ENCODE measurements at regions of chr15 and their contacts with region 1.

Region 1: DNA sequence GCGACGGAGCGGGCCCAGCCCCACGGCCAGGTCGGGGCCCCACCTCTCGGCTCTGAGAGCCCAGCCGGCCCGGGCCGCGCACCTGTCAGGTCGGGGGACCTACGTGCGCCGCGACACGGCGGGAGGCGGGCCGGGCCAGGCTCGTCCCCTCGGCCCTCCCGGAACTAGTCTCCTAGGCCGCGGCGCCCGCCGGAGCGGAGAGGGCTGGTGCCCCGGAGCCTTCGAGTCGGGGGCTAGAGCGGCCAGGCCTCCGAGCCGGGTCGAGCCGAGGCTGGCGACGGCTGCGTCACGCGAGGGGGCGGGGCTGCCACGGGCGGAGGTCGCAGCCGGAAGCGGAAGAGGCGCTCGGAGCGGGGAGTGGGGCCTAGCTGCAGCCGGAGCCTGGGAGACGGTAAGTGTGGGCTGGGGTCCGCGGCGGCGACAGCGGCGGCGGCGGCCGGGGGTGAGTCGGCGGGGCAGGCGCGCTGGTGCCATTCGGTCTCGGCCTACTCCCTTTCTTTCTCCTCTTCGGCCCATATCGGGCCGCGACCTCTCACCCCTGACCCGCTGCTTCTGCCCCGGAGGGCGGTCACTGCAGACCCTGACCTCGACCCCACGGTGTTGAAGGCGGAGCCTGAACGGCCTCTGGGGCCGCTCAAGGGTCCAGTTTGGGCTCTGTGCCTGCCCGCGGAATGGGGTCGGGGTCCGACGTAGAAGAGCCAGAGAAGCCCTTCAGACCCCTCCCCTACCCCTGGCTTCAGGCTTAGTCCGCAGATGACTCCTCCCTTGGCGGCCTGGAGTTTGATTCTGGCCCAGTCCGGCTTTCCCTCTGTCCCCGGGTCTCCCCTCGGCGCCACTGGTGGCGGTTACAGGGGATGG is at the start of gene CLK3:
- DNase-seq: peak; percentile 98
- ATAC-seq: peak; percentile 90
- total RNA-seq, gene CLK3: 47.3 TPM

Region 2: GRCh38 chr15:74433592-74434262 is 182.0 kb before region 1 on chr15 and contains the start of gene SEMA7A:
- intact Hi-C with region 1: loop called (anchors 10 kb)
- DNase-seq: peak; percentile 92
- ATAC-seq: peak; percentile 91
- total RNA-seq, gene SEMA7A: 1.6 TPM

Region 3: GRCh38 chr15:74460871-74461846 is 154.6 kb before region 1 on chr15 and contains the start of gene UBL7:
- intact Hi-C with region 1: loop called (anchors 5 kb)
- DNase-seq: peak; percentile 98
- ATAC-seq: peak; percentile 100
- total RNA-seq, gene UBL7: 47.7 TPM

Region 4: DNA sequence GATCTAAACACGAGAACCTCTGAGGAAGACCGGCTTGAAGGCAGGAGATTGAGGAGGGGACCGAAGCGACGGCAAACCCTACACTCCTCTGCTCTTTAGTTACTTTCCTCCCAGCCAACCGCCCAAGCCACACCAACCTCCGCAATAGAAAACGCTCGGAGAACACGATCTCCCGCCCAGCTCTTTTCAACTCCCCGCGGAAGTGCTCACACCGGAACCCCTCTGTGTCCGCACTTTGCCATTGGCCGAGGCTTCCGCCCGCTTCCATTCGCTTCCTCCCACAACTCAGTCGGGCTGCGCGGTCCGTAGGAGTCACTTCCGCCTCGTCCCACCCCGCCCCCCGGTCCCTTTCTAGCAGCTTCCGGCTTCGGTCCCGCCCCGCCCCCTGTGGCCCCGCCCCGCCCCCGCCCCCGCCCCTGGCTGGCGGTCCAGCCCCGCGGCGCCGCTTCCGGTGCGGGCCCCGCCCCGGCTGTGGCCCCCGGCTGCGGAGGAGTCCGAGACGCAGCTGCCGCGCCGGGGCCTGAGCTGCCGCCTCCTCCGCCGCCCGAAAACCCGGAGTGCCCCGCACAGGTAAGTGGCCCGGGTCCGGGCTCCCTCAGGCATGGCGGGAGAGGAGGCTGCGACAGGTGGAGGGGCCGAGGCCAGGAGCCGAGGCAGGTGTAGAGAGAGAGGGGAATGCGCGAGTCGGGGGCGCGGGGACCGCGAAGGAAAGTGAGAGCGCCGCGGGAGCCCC is 74.8 kb before region 1 on chr15 and contains the start of gene ARID3B:
- intact Hi-C with region 1: loop called (anchors 1 kb)
- DNase-seq: peak; percentile 98
- ATAC-seq: peak; percentile 99
- total RNA-seq, gene ARID3B: 1.4 TPM

Region 5: GRCh38 chr15:74545880-74546656 is 69.7 kb before region 1 on chr15:
- intact Hi-C with region 1: loop called (anchors 1 kb)
- DNase-seq: peak; percentile 98
- ATAC-seq: peak; percentile 94

Region 6: GRCh38 chr15:74664028-74664616 is 48.4 kb after region 1 on chr15:
- intact Hi-C with region 1: no loop called
- DNase-seq: no peak
- ATAC-seq: peak; percentile 87

Region 7: DNA sequence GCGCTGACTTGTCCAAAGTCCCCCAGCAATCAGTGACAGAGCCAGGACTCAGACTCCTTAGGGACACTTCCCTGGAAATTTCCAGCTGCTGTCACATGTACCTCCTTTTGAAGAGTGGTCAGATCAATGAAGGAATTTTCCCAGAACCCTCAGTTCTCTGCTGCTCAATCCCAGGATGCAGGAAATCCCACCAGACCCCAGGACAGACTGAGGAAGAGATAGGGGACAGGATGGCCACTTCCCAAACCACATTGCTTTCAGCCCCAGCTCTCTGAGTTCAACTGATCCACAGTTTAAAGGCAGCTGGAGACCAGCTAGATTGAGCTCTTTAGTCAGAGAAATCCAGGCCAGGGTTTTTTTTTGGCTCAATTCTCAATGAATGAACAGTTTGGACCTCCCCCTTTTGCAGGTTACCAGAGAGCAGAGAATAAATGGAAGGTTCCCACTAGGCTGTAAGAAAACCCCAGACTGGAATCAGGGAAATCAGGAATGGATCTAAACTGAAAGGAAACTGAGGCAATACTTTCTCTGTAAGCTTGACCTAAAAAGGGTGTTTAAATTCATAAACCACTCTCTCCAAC is 108.1 kb after region 1 on chr15:
- intact Hi-C with region 1: no loop called
- DNase-seq: no peak
- ATAC-seq: no peak

Region 8: GRCh38 chr15:74956648-74957300 is 341.0 kb after region 1 on chr15 and contains the start of gene RPP25:
- intact Hi-C with region 1: no loop called
- DNase-seq: peak; percentile 89
- ATAC-seq: peak; percentile 92
- total RNA-seq, gene RPP25: 2.7 TPM

Measured in Right ventricle myocardium inferior (tissue), 1 donor.